Prostate gland (tissue), 2 donors: ENCODE measurements at regions of chr13 and their contacts with region 1.

Region 1: GRCh38 chr13:26929971-26930730 is 169.6 kb upstream of the GPR12 start:
- DNase-seq: peak; percentile 28
- H3K4me3 ChIP-seq: no peak overlapping the region
- H3K27ac ChIP-seq: no peak overlapping the region
- H3K4me1 ChIP-seq: no peaks in the 10 kb centered on the region
- H3K27me3 ChIP-seq: no peaks in the 10 kb centered on the region
- CTCF ChIP-seq: peak; percentile 70 to 83 (median 78)
- POLR2A ChIP-seq: no peak

Region 2: GRCh38 chr13:26186118-26186870 is 743.9 kb before region 1 on chr13:
- intact Hi-C with region 1: loop called (anchors 10 kb)
- DNase-seq: peak; percentile 87
- H3K4me3 ChIP-seq: peak overlapping the region; percentile 42 to 53
- H3K27ac ChIP-seq: peak overlapping the region; percentile 48 to 67
- H3K4me1 ChIP-seq: no peaks in the 10 kb centered on the region
- H3K27me3 ChIP-seq: no peaks in the 10 kb centered on the region
- CTCF ChIP-seq: peak in 3 of 4 experiments; percentile 27 to 72 (median 68)
- POLR2A ChIP-seq: peak; percentile 29

Region 3: GRCh38 chr13:26707122-26708006 is 222.8 kb before region 1 on chr13:
- intact Hi-C with region 1: loop called (anchors 5 kb)
- DNase-seq: no peak
- H3K4me3 ChIP-seq: no peak overlapping the region
- H3K27ac ChIP-seq: no peak overlapping the region
- H3K4me1 ChIP-seq: no peaks in the 10 kb centered on the region
- H3K27me3 ChIP-seq: peaks cover 4% of the 10 kb centered on the region
- CTCF ChIP-seq: peak in 3 of 4 experiments; percentile 33 to 58 (median 57)
- POLR2A ChIP-seq: no peak

Region 4: GRCh38 chr13:26837997-26838396 is 92.2 kb before region 1 on chr13:
- intact Hi-C with region 1: no loop called
- DNase-seq: no peak
- H3K4me3 ChIP-seq: no peak overlapping the region
- H3K27ac ChIP-seq: no peak overlapping the region
- H3K4me1 ChIP-seq: no peaks in the 10 kb centered on the region
- H3K27me3 ChIP-seq: no peaks in the 10 kb centered on the region
- CTCF ChIP-seq: no peak
- POLR2A ChIP-seq: no peak

Region 5: GRCh38 chr13:27977476-27978300 is 1047.5 kb after region 1 on chr13:
- intact Hi-C with region 1: loop called (anchors 10 kb)
- DNase-seq: no peak
- H3K4me3 ChIP-seq: no peak overlapping the region
- H3K27ac ChIP-seq: no peak overlapping the region
- H3K4me1 ChIP-seq: no peaks in the 10 kb centered on the region
- H3K27me3 ChIP-seq: peaks cover 69% of the 10 kb centered on the region
- CTCF ChIP-seq: no peak
- POLR2A ChIP-seq: no peak